Activated B cell treated with CpG ODN at 0.5 μM for 24 hours (primary cell): ENCODE measurements at regions of chr3 and their contacts with region 1.

Region 1: GRCh38 chr3:128804017-128804810 is 75.2 kb upstream of the ACAD9 start:
- DNase-seq: no peak
- ATAC-seq: peak; percentile 94
- H3K4me3 Mint-ChIP-seq: peak overlapping the region; percentile 55
- H3K27ac Mint-ChIP-seq: peak overlapping the region; percentile 83
- H3K4me1 Mint-ChIP-seq: peaks cover 54% of the 10 kb centered on the region
- H3K27me3 Mint-ChIP-seq: no peaks in the 10 kb centered on the region
- CTCF ChIP-seq: no peak

Region 2: DNA sequence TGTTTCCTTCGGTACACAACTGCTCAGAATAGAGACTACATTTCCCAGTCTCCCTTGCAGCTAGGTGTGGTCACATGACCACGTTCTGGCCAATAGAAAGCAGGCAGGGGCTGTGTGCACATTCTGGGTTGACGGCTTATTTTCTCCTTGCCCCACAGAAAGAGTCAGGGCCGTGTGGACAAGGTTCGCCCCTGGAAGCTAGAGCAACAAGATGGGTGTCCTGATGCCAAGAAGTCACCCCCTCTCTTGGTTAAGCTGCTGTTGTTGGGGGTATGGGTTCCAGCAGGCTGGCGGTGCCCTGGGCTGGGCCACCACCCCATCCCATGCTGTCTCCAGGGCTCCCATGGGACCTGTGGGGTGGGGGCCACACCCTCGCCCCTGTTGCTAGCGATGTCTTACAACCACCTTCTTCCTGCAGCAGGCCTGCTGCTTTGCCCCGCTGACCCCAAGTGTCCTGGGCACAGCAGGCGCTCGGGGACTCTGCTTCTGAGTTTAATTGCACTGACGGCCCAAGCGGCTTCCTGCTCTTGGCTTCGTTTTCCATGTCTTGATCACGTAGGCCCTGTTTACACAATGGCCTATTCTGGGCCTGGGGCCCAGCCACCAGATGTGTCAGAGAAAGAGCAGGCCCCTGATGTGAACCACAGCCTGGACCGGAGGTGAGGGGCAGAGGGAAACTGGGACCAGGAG is 1106.5 kb before region 1 on chr3:
- CTCF ChIA-PET with region 1: no interaction called
- POLR2A ChIA-PET with region 1: no interaction called
- intact Hi-C with region 1: no loop called
- DNase-seq: peak; percentile 42
- ATAC-seq: peak; percentile 83
- H3K4me3 Mint-ChIP-seq: peak overlapping the region; percentile 70
- H3K27ac Mint-ChIP-seq: peak overlapping the region; percentile 57
- H3K4me1 Mint-ChIP-seq: peaks cover 24% of the 10 kb centered on the region
- H3K27me3 Mint-ChIP-seq: peaks cover 2% of the 10 kb centered on the region
- CTCF ChIP-seq: no peak

Region 3: GRCh38 chr3:128845778-128846485 is 41.7 kb after region 1 on chr3:
- CTCF ChIA-PET with region 1: interaction called, 4 read pairs
- POLR2A ChIA-PET with region 1: no interaction called
- intact Hi-C with region 1: loop called (anchors 2 kb)
- DNase-seq: peak; percentile 72
- ATAC-seq: peak; percentile 87
- H3K4me3 Mint-ChIP-seq: peak overlapping the region; percentile 88
- H3K27ac Mint-ChIP-seq: peak overlapping the region; percentile 36
- H3K4me1 Mint-ChIP-seq: peaks cover 10% of the 10 kb centered on the region
- H3K27me3 Mint-ChIP-seq: no peaks in the 10 kb centered on the region
- CTCF ChIP-seq: no peak